Activated CD4-positive, alpha-beta T cell treated with anti-CD3 and anti-CD28 coated beads for 36 hours (primary cell): ENCODE measurements at regions of chr17 and their contacts with region 1.

Region 1: GRCh38 chr17:63946440-63947367 is 14.6 kb upstream of the CD79B start:
- DNase-seq: peak; percentile 79
- ATAC-seq: peak; percentile 95
- H3K4me3 Mint-ChIP-seq: peak overlapping the region; percentile 21
- H3K27ac Mint-ChIP-seq: peak overlapping the region; percentile 65
- H3K4me1 Mint-ChIP-seq: peaks cover 13% of the 10 kb centered on the region
- H3K27me3 Mint-ChIP-seq: no peaks in the 10 kb centered on the region

Region 2: DNA sequence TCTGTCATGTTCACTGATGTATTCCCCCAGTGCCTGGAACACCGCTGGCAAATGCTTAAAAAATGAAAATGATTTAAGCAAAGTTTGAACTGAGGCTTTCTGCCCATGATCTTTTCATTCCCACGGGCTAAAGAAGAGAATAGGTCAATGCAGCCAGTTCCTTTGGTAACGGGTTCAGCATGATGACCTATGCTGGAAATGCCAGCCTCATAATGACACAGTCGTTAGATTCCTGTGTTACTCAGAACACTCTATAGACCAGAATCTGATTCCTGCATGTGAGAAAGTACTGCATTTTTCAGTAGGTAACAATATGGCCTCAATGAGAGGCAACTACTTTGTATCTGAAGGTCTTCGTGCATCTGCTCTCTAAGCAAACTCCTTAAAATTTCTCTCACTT is 227.7 kb before region 1 on chr17:
- CTCF ChIA-PET with region 1: no interaction called
- POLR2A ChIA-PET with region 1: no interaction called
- intact Hi-C with region 1: no loop called
- DNase-seq: no peak
- ATAC-seq: no peak
- H3K4me3 Mint-ChIP-seq: no peak overlapping the region
- H3K27ac Mint-ChIP-seq: no peak overlapping the region
- H3K4me1 Mint-ChIP-seq: no peaks in the 10 kb centered on the region
- H3K27me3 Mint-ChIP-seq: no peaks in the 10 kb centered on the region

Region 3: GRCh38 chr17:63827002-63827771 is 119.5 kb before region 1 on chr17 and contains the starts of genes FTSJ3 and PSMC5:
- CTCF ChIA-PET with region 1: no interaction called
- POLR2A ChIA-PET with region 1: no interaction called
- intact Hi-C with region 1: no loop called
- DNase-seq: peak; percentile 97
- ATAC-seq: peak; percentile 94
- H3K4me3 Mint-ChIP-seq: peak within 1 kb of the TSS; percentile 88
- H3K27ac Mint-ChIP-seq: peak within 1 kb of the TSS; percentile 99
- H3K4me1 Mint-ChIP-seq: peaks cover 72% of the 10 kb centered on the region
- H3K27me3 Mint-ChIP-seq: no peaks in the 10 kb centered on the region
- total RNA-seq, gene FTSJ3: 52.1 to 61.2 TPM
- total RNA-seq, gene PSMC5: 98.2 to 160 TPM

Region 4: GRCh38 chr17:63919311-63919723 is 27.4 kb before region 1 on chr17:
- CTCF ChIA-PET with region 1: interaction called, 34 read pairs
- POLR2A ChIA-PET with region 1: no interaction called
- intact Hi-C with region 1: loop called (anchors 1 kb)
- DNase-seq: peak; percentile 84
- ATAC-seq: peak; percentile 99
- H3K4me3 Mint-ChIP-seq: no peak overlapping the region
- H3K27ac Mint-ChIP-seq: no peak overlapping the region
- H3K4me1 Mint-ChIP-seq: peaks cover 6% of the 10 kb centered on the region
- H3K27me3 Mint-ChIP-seq: no peaks in the 10 kb centered on the region

Region 5: DNA sequence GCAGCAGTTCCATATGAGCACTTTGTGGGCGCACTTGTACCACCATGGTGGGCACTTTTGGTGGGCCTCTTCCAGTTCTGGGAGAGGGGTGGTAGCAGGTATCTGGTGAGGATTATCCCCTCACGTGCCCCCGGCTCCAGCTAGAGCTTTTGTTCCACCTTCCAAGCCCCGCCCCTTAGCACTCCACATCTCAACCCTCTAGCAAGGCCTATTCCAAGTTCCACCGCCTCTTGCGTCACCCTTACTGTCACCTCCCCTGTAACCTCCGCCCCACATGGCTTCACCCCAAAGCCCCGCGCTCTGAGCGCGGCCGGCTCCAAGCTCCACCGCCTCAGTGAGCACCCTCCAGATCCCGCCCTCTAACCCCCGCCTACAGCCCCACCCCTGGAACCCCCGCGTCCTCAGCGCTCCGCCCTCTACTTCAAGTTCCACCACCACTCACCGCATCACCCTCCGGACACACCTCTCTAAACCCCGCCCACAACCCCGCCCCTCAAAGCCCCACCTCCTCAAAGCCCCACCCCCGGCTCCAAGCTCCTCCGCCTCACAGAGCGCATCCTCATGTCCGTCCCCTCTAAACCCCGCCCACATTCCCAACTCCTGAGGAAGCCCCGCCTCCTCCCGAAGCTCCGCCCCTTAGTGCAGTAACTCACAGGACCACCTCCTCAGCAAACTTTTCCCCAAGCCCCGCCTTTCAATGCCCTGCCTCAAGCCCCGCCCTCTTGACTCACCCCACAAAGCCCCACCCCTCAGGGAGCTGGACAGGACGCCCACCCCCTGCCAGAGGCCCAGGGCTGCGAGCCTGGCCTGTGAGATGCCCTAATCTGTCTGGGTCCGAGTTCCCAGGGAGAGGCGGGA is 14.9 kb after region 1 on chr17:
- CTCF ChIA-PET with region 1: interaction called, 23 read pairs
- POLR2A ChIA-PET with region 1: interaction called, 3 read pairs
- intact Hi-C with region 1: no loop called
- DNase-seq: peak; percentile 75
- ATAC-seq: peak; percentile 74
- H3K4me3 Mint-ChIP-seq: no peak overlapping the region
- H3K27ac Mint-ChIP-seq: no peak overlapping the region
- H3K4me1 Mint-ChIP-seq: peaks cover 8% of the 10 kb centered on the region
- H3K27me3 Mint-ChIP-seq: no peaks in the 10 kb centered on the region

Region 6: DNA sequence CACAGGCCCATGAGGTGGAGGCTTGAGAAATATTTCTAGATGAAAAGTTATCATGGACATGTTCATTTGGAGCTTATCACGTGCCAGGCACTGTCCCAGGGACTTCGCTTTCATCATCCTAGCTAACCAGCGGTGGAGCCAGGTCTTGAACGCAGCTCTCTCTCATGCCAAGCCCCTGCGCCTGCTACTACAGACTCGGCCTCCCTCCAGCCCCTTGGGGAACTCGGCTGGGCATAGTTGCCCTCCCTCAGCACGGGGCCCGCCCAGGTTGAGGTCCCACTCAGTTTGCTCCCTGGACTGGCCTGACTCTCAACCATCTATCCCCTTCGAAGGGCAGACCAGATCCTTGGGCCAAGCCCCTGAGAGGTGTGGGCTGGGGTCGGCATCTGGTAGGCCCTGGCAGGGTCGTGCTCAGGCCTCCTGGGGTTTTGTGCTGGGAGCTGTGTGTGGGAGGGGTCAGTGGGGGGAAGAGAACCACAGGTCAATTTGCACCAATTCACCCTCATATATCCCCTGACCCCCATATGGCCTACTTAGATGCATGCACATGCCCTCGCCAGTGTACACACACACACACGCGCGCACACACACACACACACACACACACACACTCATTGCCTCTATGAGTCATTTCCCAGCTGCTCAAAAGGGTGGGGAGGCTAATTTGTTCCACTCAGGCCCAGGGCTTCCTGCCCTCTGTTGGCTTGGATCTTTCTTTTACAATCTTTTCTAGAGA is 38.1 kb after region 1 on chr17:
- CTCF ChIA-PET with region 1: interaction called, 20 read pairs
- POLR2A ChIA-PET with region 1: no interaction called
- intact Hi-C with region 1: loop called (anchors 2 to 5 kb)
- DNase-seq: peak; percentile 86
- ATAC-seq: peak; percentile 97
- H3K4me3 Mint-ChIP-seq: peak overlapping the region; percentile 30
- H3K27ac Mint-ChIP-seq: peak overlapping the region; percentile 78
- H3K4me1 Mint-ChIP-seq: peaks cover 23% of the 10 kb centered on the region
- H3K27me3 Mint-ChIP-seq: no peaks in the 10 kb centered on the region

Region 7: GRCh38 chr17:65163990-65164495 is 1217.3 kb after region 1 on chr17:
- CTCF ChIA-PET with region 1: no interaction called
- POLR2A ChIA-PET with region 1: no interaction called
- intact Hi-C with region 1: no loop called
- DNase-seq: peak; percentile 78
- ATAC-seq: peak; percentile 100
- H3K4me3 Mint-ChIP-seq: no peak overlapping the region
- H3K27ac Mint-ChIP-seq: peak overlapping the region; percentile 58
- H3K4me1 Mint-ChIP-seq: peaks cover 15% of the 10 kb centered on the region
- H3K27me3 Mint-ChIP-seq: no peaks in the 10 kb centered on the region